Activated CD4-positive, alpha-beta memory T cell treated with anti-CD3 and anti-CD28 coated beads, Interleukin-2, amount 10 ng/mL, durations not matched to agents 7 days and 5 days (primary cell): ENCODE measurements at regions of chr17 and their contacts with region 1.

Region 1: GRCh38 chr17:59361916-59362810 is 30.7 kb downstream of the YPEL2 start:
- DNase-seq: peak; percentile 62
- H3K4me3 Mint-ChIP-seq: peak overlapping the region; percentile 64
- H3K27ac Mint-ChIP-seq: peak overlapping the region; percentile 97
- H3K4me1 Mint-ChIP-seq: peaks cover 83% of the 10 kb centered on the region
- H3K27me3 Mint-ChIP-seq: no peaks in the 10 kb centered on the region

Region 2: GRCh38 chr17:59310266-59311129 is 51.7 kb before region 1 on chr17:
- CTCF ChIA-PET with region 1: no interaction called
- POLR2A ChIA-PET with region 1: no interaction called
- DNase-seq: no peak
- H3K4me3 Mint-ChIP-seq: no peak overlapping the region
- H3K27ac Mint-ChIP-seq: no peak overlapping the region
- H3K4me1 Mint-ChIP-seq: peaks cover 6% of the 10 kb centered on the region
- H3K27me3 Mint-ChIP-seq: peaks cover 1% of the 10 kb centered on the region

Region 3: DNA sequence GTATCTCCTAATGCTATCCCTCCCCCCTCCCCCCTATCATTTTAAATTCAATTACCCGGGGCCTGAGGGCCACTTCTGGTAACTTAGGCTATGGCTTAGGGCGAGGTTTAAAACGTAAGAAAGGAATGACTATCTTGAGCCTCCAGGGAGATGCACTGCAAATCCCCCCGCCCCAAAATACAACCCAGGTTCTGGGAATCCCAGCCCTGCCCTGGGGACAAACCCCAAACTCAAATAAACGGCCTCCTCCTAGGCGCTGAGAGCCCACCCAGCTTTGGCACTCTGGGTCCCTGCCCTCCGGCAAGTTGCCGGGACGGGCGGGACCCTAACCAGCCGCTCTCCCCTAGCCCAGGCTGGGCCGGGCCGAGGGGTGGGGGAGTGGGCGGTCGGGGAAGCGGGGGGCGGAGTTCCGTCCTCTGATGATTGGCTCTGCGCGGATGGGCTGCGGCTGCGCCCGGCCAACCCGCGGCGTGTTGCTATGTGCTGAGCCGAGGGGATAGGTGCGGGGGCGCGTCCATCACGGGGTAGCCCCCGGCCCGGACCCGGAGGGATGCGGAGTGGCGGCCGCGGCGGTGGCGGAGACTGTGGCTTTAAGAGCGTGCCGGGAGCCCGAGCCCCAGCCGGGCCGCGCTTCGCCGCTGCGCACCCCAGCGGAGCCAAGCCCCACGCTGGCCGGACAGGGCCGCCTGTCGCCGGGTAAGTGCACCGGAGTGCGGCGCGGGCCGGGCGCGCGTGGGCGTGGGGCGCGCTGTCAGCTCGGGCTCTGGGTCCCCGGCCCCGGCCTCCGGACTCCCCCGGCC is 30.8 kb before region 1 on chr17 and contains the start of gene YPEL2:
- CTCF ChIA-PET with region 1: interaction called, 14 read pairs
- POLR2A ChIA-PET with region 1: interaction called, 39 read pairs
- DNase-seq: peak; percentile 90
- H3K4me3 Mint-ChIP-seq: peak within 1 kb of the TSS; percentile 85
- H3K27ac Mint-ChIP-seq: peak within 1 kb of the TSS; percentile 89
- H3K4me1 Mint-ChIP-seq: peaks cover 65% of the 10 kb centered on the region
- H3K27me3 Mint-ChIP-seq: no peaks in the 10 kb centered on the region
- total RNA-seq, gene YPEL2: 17.1 to 18.4 TPM

Region 4: GRCh38 chr17:59342681-59343131 is 19.5 kb before region 1 on chr17:
- CTCF ChIA-PET with region 1: no interaction called
- POLR2A ChIA-PET with region 1: interaction called, 12 read pairs
- DNase-seq: peak; percentile 29
- H3K4me3 Mint-ChIP-seq: no peak overlapping the region
- H3K27ac Mint-ChIP-seq: peak overlapping the region; percentile 71
- H3K4me1 Mint-ChIP-seq: peaks cover 33% of the 10 kb centered on the region
- H3K27me3 Mint-ChIP-seq: no peaks in the 10 kb centered on the region

Region 5: GRCh38 chr17:59393011-59393679 is 31.0 kb after region 1 on chr17:
- CTCF ChIA-PET with region 1: no interaction called
- POLR2A ChIA-PET with region 1: no interaction called
- DNase-seq: no peak
- H3K4me3 Mint-ChIP-seq: no peak overlapping the region
- H3K27ac Mint-ChIP-seq: no peak overlapping the region
- H3K4me1 Mint-ChIP-seq: peaks cover 3% of the 10 kb centered on the region
- H3K27me3 Mint-ChIP-seq: no peaks in the 10 kb centered on the region

Region 6: GRCh38 chr17:59415397-59415796 is 53.2 kb after region 1 on chr17:
- CTCF ChIA-PET with region 1: no interaction called
- POLR2A ChIA-PET with region 1: interaction called, 12 read pairs
- DNase-seq: no peak
- H3K4me3 Mint-ChIP-seq: no peak overlapping the region
- H3K27ac Mint-ChIP-seq: peak overlapping the region; percentile 5
- H3K4me1 Mint-ChIP-seq: peaks cover 34% of the 10 kb centered on the region
- H3K27me3 Mint-ChIP-seq: no peaks in the 10 kb centered on the region

Region 7: GRCh38 chr17:59435238-59435637 is 73.1 kb after region 1 on chr17:
- CTCF ChIA-PET with region 1: interaction called, 8 read pairs
- POLR2A ChIA-PET with region 1: interaction called, 16 read pairs
- DNase-seq: no peak
- H3K4me3 Mint-ChIP-seq: peak overlapping the region; percentile 40
- H3K27ac Mint-ChIP-seq: peak overlapping the region; percentile 83
- H3K4me1 Mint-ChIP-seq: peaks cover 68% of the 10 kb centered on the region
- H3K27me3 Mint-ChIP-seq: no peaks in the 10 kb centered on the region

Region 8: GRCh38 chr17:59440784-59441441 is 78.8 kb after region 1 on chr17:
- CTCF ChIA-PET with region 1: interaction called, 8 read pairs
- POLR2A ChIA-PET with region 1: interaction called, 16 read pairs
- DNase-seq: peak; percentile 92
- H3K4me3 Mint-ChIP-seq: peak overlapping the region; percentile 60
- H3K27ac Mint-ChIP-seq: peak overlapping the region; percentile 77
- H3K4me1 Mint-ChIP-seq: peaks cover 55% of the 10 kb centered on the region
- H3K27me3 Mint-ChIP-seq: no peaks in the 10 kb centered on the region

Region 9: GRCh38 chr17:59451706-59452105 is 89.5 kb after region 1 on chr17:
- CTCF ChIA-PET with region 1: no interaction called
- POLR2A ChIA-PET with region 1: no interaction called
- DNase-seq: no peak
- H3K4me3 Mint-ChIP-seq: no peak overlapping the region
- H3K27ac Mint-ChIP-seq: no peak overlapping the region
- H3K4me1 Mint-ChIP-seq: no peaks in the 10 kb centered on the region
- H3K27me3 Mint-ChIP-seq: peaks cover 2% of the 10 kb centered on the region